ENCODE measurements at regions of chr7 and their contacts with region 1.

Region 1: DNA sequence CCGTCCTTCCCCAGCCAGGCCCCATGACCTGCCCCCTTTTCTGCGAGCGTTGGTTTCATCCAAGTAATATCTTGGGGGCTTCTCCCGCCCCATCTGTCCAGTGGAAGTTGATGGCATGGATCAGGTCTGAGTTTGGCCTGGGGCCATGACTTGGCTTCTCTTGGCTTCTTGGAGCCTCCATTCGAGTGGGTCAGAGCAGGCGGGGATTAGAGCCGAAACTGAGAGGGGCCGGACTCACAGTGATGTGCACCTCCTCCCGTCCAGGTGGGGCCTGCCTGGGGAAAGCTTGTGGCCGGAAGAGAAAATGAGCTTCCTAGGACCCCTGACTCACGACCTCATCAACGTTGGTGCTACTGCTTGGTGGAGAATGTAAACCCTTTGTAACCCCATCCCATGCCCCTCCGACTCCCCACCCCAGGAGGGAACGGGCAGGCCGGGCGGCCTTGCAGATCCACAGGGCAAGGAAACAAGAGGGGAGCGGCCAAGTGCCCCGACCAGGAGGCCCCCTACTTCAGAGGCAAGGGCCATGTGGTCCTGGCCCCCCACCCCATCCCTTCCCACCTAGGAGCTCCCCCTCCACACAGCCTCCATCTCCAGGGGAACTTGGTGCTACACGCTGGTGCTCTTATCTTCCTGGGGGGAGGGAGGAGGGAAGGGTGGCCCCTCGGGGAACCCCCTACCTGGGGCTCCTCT is 15.1 kb upstream of the LIMK1 start:
- H3K4me3 Mint-ChIP-seq: no peak overlapping the region
- H3K27ac Mint-ChIP-seq: no peak overlapping the region
- H3K4me1 Mint-ChIP-seq: no peaks in the 10 kb centered on the region
- H3K27me3 Mint-ChIP-seq: peaks cover 12% of the 10 kb centered on the region

Region 2: GRCh38 chr7:74401137-74401859 is 332.8 kb after region 1 on chr7:
- intact Hi-C with region 1: loop called (anchors 2 kb)
- H3K4me3 Mint-ChIP-seq: no peak overlapping the region
- H3K27ac Mint-ChIP-seq: no peak overlapping the region
- H3K4me1 Mint-ChIP-seq: no peaks in the 10 kb centered on the region
- H3K27me3 Mint-ChIP-seq: no peaks in the 10 kb centered on the region